ENCODE measurements at regions of chr6 and their contacts with region 1.

Region 1: GRCh38 chr6:105402939-105403935 is at the start of gene PREP:
- DNase-seq: peak; percentile 88
- ATAC-seq: peak; percentile 94
- H3K4me3 ChIP-seq: peak within 1 kb of the TSS; percentile 80 to 87 (median 83)
- H3K4me3 Mint-ChIP-seq: peak within 1 kb of the TSS; percentile 93
- H3K27ac ChIP-seq: peak within 1 kb of the TSS in 1 of 2 donors; percentile 50
- H3K27ac Mint-ChIP-seq: peak within 1 kb of the TSS; percentile 80
- H3K4me1 ChIP-seq: peaks cover 20% of the 10 kb centered on the region in 2 donors
- H3K4me1 Mint-ChIP-seq: peaks cover 41% of the 10 kb centered on the region
- H3K27me3 ChIP-seq: peaks cover 0 to 4% (median 0%) of the 10 kb centered on the region in 4 experiments
- H3K27me3 Mint-ChIP-seq: peaks cover 13% of the 10 kb centered on the region
- CTCF ChIP-seq: peak; percentile 88
- total RNA-seq, gene PREP: 25.8 and 27.0 TPM in 2 replicates

Region 2: GRCh38 chr6:104859225-104860146 is 543.8 kb before region 1 on chr6 and contains the start of gene HACE1:
- CTCF ChIA-PET with region 1: no interaction called
- POLR2A ChIA-PET with region 1: no interaction called
- intact Hi-C with region 1: loop called (anchors 2 kb)
- DNase-seq: peak; percentile 90
- ATAC-seq: peak; percentile 96
- H3K4me3 ChIP-seq: peak within 1 kb of the TSS; percentile 21 to 89 (median 77)
- H3K4me3 Mint-ChIP-seq: peak within 1 kb of the TSS; percentile 96
- H3K27ac ChIP-seq: peak within 1 kb of the TSS; percentile 12 to 58
- H3K27ac Mint-ChIP-seq: peak within 1 kb of the TSS; percentile 89
- H3K4me1 ChIP-seq: peaks cover 6 to 8% of the 10 kb centered on the region in 2 donors
- H3K4me1 Mint-ChIP-seq: peaks cover 17% of the 10 kb centered on the region
- H3K27me3 ChIP-seq: no peaks in the 10 kb centered on the region
- H3K27me3 Mint-ChIP-seq: peaks cover 19% of the 10 kb centered on the region
- CTCF ChIP-seq: no peak
- total RNA-seq, gene HACE1: 19.2 and 21.4 TPM in 2 replicates

Region 3: GRCh38 chr6:105087571-105088211 is 315.5 kb before region 1 on chr6:
- CTCF ChIA-PET with region 1: interaction called, 6 read pairs
- POLR2A ChIA-PET with region 1: no interaction called
- intact Hi-C with region 1: loop called (anchors 1 kb)
- DNase-seq: peak; percentile 56
- ATAC-seq: no peak
- H3K4me3 ChIP-seq: no peak overlapping the region
- H3K4me3 Mint-ChIP-seq: no peak overlapping the region
- H3K27ac ChIP-seq: no peak overlapping the region
- H3K27ac Mint-ChIP-seq: no peak overlapping the region
- H3K4me1 ChIP-seq: no peaks in the 10 kb centered on the region
- H3K4me1 Mint-ChIP-seq: no peaks in the 10 kb centered on the region
- H3K27me3 ChIP-seq: no peaks in the 10 kb centered on the region
- H3K27me3 Mint-ChIP-seq: peaks cover 15% of the 10 kb centered on the region
- CTCF ChIP-seq: peak; percentile 87

Region 4: DNA sequence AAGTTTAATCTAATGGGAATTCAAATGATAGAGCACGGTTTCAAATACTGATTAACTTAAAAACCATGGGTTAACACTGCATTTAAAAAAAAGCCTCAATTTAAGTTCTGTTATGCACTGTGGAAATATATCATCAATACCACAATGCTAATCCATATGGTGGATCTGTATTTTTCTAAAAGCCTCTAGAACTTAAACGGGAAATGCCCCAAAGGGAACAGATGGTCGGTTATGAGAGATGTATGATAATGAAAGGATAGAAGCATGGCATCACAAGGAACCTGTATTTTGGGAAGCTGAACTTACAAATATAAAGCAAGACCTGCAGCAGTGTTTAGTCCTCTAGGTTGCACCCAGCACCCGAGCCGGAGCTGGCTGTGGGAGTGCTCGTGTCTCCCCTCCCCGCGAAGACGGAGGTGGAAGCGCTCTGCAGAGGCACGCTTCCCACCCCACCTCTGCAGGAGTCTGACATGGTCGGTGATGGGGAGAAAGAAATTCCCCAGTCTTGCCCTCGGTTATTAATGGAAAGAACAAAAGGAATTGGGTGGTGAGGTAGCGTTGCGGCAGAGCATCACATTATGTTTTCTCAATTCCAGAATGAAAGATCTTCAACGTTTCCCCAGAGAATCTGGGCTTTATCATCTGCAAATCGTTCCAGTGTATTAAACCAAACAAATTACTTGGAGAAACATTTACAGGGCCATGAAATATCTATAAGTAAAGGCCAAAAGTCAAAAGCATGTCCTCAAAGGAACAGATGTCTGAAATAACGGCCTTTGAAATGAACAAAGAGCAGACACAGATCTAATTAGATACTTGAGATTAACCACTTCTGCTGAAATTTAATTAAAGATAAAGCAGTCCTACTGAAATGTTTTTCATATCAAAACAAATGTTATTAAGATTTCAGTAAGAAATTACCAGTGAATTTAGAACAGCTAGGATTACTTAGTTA is 120.3 kb before region 1 on chr6:
- CTCF ChIA-PET with region 1: no interaction called
- POLR2A ChIA-PET with region 1: no interaction called
- intact Hi-C with region 1: no loop called
- DNase-seq: no peak
- ATAC-seq: no peak
- H3K4me3 ChIP-seq: no peak overlapping the region
- H3K4me3 Mint-ChIP-seq: no peak overlapping the region
- H3K27ac ChIP-seq: no peak overlapping the region
- H3K27ac Mint-ChIP-seq: no peak overlapping the region
- H3K4me1 ChIP-seq: no peaks in the 10 kb centered on the region
- H3K4me1 Mint-ChIP-seq: no peaks in the 10 kb centered on the region
- H3K27me3 ChIP-seq: no peaks in the 10 kb centered on the region
- H3K27me3 Mint-ChIP-seq: no peaks in the 10 kb centered on the region
- CTCF ChIP-seq: no peak

Region 5: DNA sequence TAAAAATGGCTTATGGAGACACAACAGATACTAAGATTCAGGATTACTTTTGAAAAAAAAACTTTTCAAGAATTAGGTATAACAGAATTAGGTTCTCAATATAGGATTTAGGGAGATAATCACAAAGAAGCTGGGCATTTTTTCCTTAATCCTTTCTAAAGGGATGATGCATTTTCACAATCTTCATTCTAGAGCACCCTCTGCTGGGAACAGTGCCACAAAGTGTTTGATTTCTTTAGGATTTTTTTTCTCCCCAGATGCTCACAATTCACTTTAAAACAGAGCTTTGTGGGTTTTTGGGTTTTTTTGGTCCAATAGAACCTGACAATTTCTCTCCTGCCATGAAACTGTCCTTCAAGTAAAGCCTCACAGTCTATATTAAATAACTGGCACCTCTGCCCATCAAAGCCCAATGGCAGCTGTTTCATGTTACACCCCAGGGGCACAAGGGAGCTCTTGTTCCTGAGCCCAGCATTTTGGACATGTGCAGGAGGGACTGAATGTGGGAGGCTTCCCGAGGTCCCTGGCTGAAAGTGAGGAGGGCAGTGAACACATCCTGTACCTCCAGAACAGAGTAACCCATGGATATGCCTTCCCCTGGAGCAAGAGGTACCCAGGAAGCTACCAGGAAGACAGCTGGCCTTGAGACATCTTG is 40.0 kb before region 1 on chr6:
- CTCF ChIA-PET with region 1: no interaction called
- POLR2A ChIA-PET with region 1: no interaction called
- intact Hi-C with region 1: no loop called
- DNase-seq: no peak
- ATAC-seq: no peak
- H3K4me3 ChIP-seq: no peak overlapping the region
- H3K4me3 Mint-ChIP-seq: no peak overlapping the region
- H3K27ac ChIP-seq: no peak overlapping the region
- H3K27ac Mint-ChIP-seq: no peak overlapping the region
- H3K4me1 ChIP-seq: no peaks in the 10 kb centered on the region
- H3K4me1 Mint-ChIP-seq: no peaks in the 10 kb centered on the region
- H3K27me3 ChIP-seq: no peaks in the 10 kb centered on the region
- H3K27me3 Mint-ChIP-seq: no peaks in the 10 kb centered on the region
- CTCF ChIP-seq: no peak

Region 6: GRCh38 chr6:105374010-105374420 is 29.2 kb before region 1 on chr6:
- CTCF ChIA-PET with region 1: interaction called, 3 read pairs
- POLR2A ChIA-PET with region 1: interaction called, 11 read pairs
- intact Hi-C with region 1: no loop called
- DNase-seq: no peak
- ATAC-seq: no peak
- H3K4me3 ChIP-seq: no peak overlapping the region
- H3K4me3 Mint-ChIP-seq: no peak overlapping the region
- H3K27ac ChIP-seq: no peak overlapping the region
- H3K27ac Mint-ChIP-seq: no peak overlapping the region
- H3K4me1 ChIP-seq: no peaks in the 10 kb centered on the region
- H3K4me1 Mint-ChIP-seq: no peaks in the 10 kb centered on the region
- H3K27me3 ChIP-seq: no peaks in the 10 kb centered on the region
- H3K27me3 Mint-ChIP-seq: no peaks in the 10 kb centered on the region
- CTCF ChIP-seq: no peak

Region 7: GRCh38 chr6:105388152-105388791 is 15.0 kb before region 1 on chr6:
- CTCF ChIA-PET with region 1: no interaction called
- POLR2A ChIA-PET with region 1: no interaction called
- intact Hi-C with region 1: no loop called
- DNase-seq: no peak
- ATAC-seq: no peak
- H3K4me3 ChIP-seq: no peak overlapping the region
- H3K4me3 Mint-ChIP-seq: no peak overlapping the region
- H3K27ac ChIP-seq: no peak overlapping the region
- H3K27ac Mint-ChIP-seq: no peak overlapping the region
- H3K4me1 ChIP-seq: no peaks in the 10 kb centered on the region
- H3K4me1 Mint-ChIP-seq: no peaks in the 10 kb centered on the region
- H3K27me3 ChIP-seq: no peaks in the 10 kb centered on the region
- H3K27me3 Mint-ChIP-seq: no peaks in the 10 kb centered on the region
- CTCF ChIP-seq: no peak

Region 8: GRCh38 chr6:105424175-105424783 is 21.0 kb after region 1 on chr6:
- CTCF ChIA-PET with region 1: interaction called, 4 read pairs
- POLR2A ChIA-PET with region 1: no interaction called
- intact Hi-C with region 1: loop called (anchors 2 kb)
- DNase-seq: peak; percentile 72
- ATAC-seq: peak; percentile 70
- H3K4me3 ChIP-seq: no peak overlapping the region
- H3K4me3 Mint-ChIP-seq: no peak overlapping the region
- H3K27ac ChIP-seq: no peak overlapping the region
- H3K27ac Mint-ChIP-seq: no peak overlapping the region
- H3K4me1 ChIP-seq: no peaks in the 10 kb centered on the region
- H3K4me1 Mint-ChIP-seq: no peaks in the 10 kb centered on the region
- H3K27me3 ChIP-seq: no peaks in the 10 kb centered on the region
- H3K27me3 Mint-ChIP-seq: peaks cover under 1% of the 10 kb centered on the region
- CTCF ChIP-seq: peak; percentile 86

Region 9: GRCh38 chr6:105954148-105954547 is 550.9 kb after region 1 on chr6:
- CTCF ChIA-PET with region 1: no interaction called
- POLR2A ChIA-PET with region 1: no interaction called
- intact Hi-C with region 1: no loop called
- DNase-seq: no peak
- ATAC-seq: no peak
- H3K4me3 ChIP-seq: no peak overlapping the region
- H3K4me3 Mint-ChIP-seq: no peak overlapping the region
- H3K27ac ChIP-seq: no peak overlapping the region
- H3K27ac Mint-ChIP-seq: no peak overlapping the region
- H3K4me1 ChIP-seq: no peaks in the 10 kb centered on the region
- H3K4me1 Mint-ChIP-seq: no peaks in the 10 kb centered on the region
- H3K27me3 ChIP-seq: no peaks in the 10 kb centered on the region
- H3K27me3 Mint-ChIP-seq: peaks cover 6% of the 10 kb centered on the region
- CTCF ChIP-seq: no peak

Region 10: DNA sequence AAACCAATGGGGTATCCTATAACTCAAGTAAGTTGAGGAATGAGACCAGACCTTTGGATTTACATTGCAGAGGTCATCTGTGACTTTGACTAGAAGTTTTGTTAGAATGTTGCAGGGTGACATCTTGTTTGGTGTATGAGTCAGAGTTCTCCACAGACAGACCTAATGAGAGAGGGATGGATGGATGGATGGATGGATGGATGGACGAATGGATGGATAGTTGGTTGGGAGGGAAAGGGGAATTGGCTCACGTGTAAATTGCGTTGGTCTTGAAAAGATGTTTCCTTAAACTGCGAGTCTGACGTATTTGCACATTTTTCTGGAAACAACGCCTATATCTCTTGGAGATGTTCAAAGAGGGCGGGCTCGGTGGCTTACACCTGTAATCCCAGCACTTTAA is 1623.7 kb after region 1 on chr6:
- CTCF ChIA-PET with region 1: no interaction called
- POLR2A ChIA-PET with region 1: no interaction called
- intact Hi-C with region 1: loop called (anchors 5 kb)
- DNase-seq: peak; percentile 19
- ATAC-seq: no peak
- H3K4me3 ChIP-seq: no peak overlapping the region
- H3K4me3 Mint-ChIP-seq: peak overlapping the region; percentile 50
- H3K27ac ChIP-seq: no peak overlapping the region
- H3K27ac Mint-ChIP-seq: peak overlapping the region; percentile 28
- H3K4me1 ChIP-seq: peaks cover 6 to 10% of the 10 kb centered on the region in 2 donors
- H3K4me1 Mint-ChIP-seq: peaks cover 23% of the 10 kb centered on the region
- H3K27me3 ChIP-seq: no peaks in the 10 kb centered on the region
- H3K27me3 Mint-ChIP-seq: no peaks in the 10 kb centered on the region
- CTCF ChIP-seq: no peak